ENCODE measurements at regions of chr2 and their contacts with region 1.

Region 1: GRCh38 chr2:26745609-26746327 is 18.3 kb upstream of the SLC35F6 start:
- DNase-seq: peak; percentile 88
- H3K4me3 Mint-ChIP-seq: no peak overlapping the region
- H3K27ac Mint-ChIP-seq: no peak overlapping the region
- H3K4me1 Mint-ChIP-seq: no peaks in the 10 kb centered on the region
- H3K27me3 Mint-ChIP-seq: no peaks in the 10 kb centered on the region
- CTCF ChIP-seq: peak; percentile 91

Region 2: DNA sequence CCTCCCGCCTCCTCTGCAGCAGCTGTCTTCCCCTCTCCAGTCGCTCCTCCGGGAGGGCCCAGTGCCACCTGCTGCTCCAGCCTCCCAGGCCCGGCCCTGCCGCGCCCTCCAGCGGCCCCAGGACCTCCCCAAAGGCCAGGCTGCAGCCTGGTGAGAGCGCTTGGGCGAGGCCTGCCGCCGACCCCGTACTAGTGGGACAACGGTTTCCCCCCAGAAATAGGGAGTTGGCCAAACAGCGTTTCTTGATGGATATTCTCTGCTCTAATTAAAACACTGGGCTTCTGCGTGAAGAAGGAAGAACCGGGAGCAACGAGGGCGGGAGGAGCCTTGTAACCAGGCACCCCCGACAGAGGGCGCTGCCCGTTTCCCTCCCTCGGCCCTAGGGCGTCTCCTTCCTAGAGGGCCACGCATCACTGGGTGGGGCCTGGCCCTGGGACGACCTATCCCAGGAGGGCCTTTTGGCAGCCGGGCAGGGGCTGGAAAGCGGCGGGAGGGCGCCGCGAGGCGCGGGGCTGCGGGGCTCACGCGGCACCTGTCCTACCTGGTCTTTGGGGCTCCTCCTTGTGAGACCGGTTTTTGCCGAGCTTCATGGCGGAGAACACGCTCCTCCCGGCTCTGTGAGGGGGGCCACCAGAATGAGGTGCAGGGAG is 242.4 kb before region 1 on chr2:
- CTCF ChIA-PET with region 1: no interaction called
- POLR2A ChIA-PET with region 1: no interaction called
- intact Hi-C with region 1: loop called (anchors 1 kb)
- DNase-seq: peak; percentile 79
- H3K4me3 Mint-ChIP-seq: peak overlapping the region; percentile 58
- H3K27ac Mint-ChIP-seq: no peak overlapping the region
- H3K4me1 Mint-ChIP-seq: peaks cover 5% of the 10 kb centered on the region
- H3K27me3 Mint-ChIP-seq: peaks cover 25% of the 10 kb centered on the region
- CTCF ChIP-seq: peak; percentile 88

Region 3: GRCh38 chr2:26597197-26597596 is 148.6 kb before region 1 on chr2:
- CTCF ChIA-PET with region 1: interaction called, 305 read pairs
- POLR2A ChIA-PET with region 1: no interaction called
- intact Hi-C with region 1: no loop called
- DNase-seq: peak; percentile 27
- H3K4me3 Mint-ChIP-seq: no peak overlapping the region
- H3K27ac Mint-ChIP-seq: no peak overlapping the region
- H3K4me1 Mint-ChIP-seq: no peaks in the 10 kb centered on the region
- H3K27me3 Mint-ChIP-seq: peaks cover 63% of the 10 kb centered on the region
- CTCF ChIP-seq: no peak

Region 4: DNA sequence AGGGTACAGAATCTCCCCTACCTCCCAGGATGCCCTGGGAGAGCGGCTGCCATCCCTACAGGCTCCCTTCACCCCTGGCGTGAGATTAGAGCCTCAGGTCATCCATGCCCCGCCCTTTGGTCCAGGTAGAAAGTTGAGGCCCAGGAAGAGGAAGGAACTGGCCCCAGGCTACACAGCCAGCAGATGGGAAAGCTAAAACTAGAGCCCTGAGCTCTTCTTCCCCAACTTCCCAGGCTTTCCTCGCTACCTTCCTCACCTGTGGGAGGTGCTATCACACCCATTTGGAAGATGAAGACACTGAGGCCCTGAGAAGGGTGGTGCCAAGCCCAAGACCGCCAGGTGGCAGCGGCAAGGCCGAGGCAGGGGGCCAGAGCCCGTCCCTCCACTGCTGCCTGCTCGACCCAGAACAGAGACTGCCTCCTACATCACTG is 130.4 kb before region 1 on chr2:
- CTCF ChIA-PET with region 1: interaction called, 19 read pairs
- POLR2A ChIA-PET with region 1: no interaction called
- intact Hi-C with region 1: no loop called
- DNase-seq: peak; percentile 56
- H3K4me3 Mint-ChIP-seq: no peak overlapping the region
- H3K27ac Mint-ChIP-seq: no peak overlapping the region
- H3K4me1 Mint-ChIP-seq: no peaks in the 10 kb centered on the region
- H3K27me3 Mint-ChIP-seq: peaks cover 41% of the 10 kb centered on the region
- CTCF ChIP-seq: peak; percentile 11

Region 5: GRCh38 chr2:26730549-26731344 is 15.0 kb before region 1 on chr2:
- CTCF ChIA-PET with region 1: interaction called, 10 read pairs
- POLR2A ChIA-PET with region 1: no interaction called
- intact Hi-C with region 1: no loop called
- DNase-seq: no peak
- H3K4me3 Mint-ChIP-seq: no peak overlapping the region
- H3K27ac Mint-ChIP-seq: no peak overlapping the region
- H3K4me1 Mint-ChIP-seq: peaks cover 6% of the 10 kb centered on the region
- H3K27me3 Mint-ChIP-seq: peaks cover 17% of the 10 kb centered on the region
- CTCF ChIP-seq: no peak